Left ventricle myocardium inferior (tissue), 1 donor: ENCODE measurements at regions of chr12 and their contacts with region 1.

Region 1: GRCh38 chr12:34022079-34022830 is at the start of gene ALG10:
- DNase-seq: peak; percentile 94
- H3K4me3 ChIP-seq: peak within 1 kb of the TSS; percentile 87
- H3K27ac ChIP-seq: peak within 1 kb of the TSS; percentile 89
- H3K4me1 ChIP-seq: peaks cover 24% of the 10 kb centered on the region
- H3K27me3 ChIP-seq: no peaks in the 10 kb centered on the region
- CTCF ChIP-seq: peak; percentile 84
- total RNA-seq, gene ALG10: 3.9 TPM

Region 2: GRCh38 chr12:32755654-32756475 is 1266.4 kb before region 1 on chr12 and contains the start of gene YARS2:
- intact Hi-C with region 1: loop called (anchors 5 kb)
- DNase-seq: peak; percentile 94
- H3K4me3 ChIP-seq: peak within 1 kb of the TSS; percentile 97
- H3K27ac ChIP-seq: peak within 1 kb of the TSS; percentile 92
- H3K4me1 ChIP-seq: peaks cover 30% of the 10 kb centered on the region
- H3K27me3 ChIP-seq: peaks cover 1% of the 10 kb centered on the region
- CTCF ChIP-seq: peak; percentile 85
- total RNA-seq, gene YARS2: 11.6 TPM

Region 3: GRCh38 chr12:32947206-32948067 is 1074.8 kb before region 1 on chr12:
- intact Hi-C with region 1: loop called (anchors 10 kb)
- DNase-seq: no peak
- H3K4me3 ChIP-seq: no peak overlapping the region
- H3K27ac ChIP-seq: no peak overlapping the region
- H3K4me1 ChIP-seq: no peaks in the 10 kb centered on the region
- H3K27me3 ChIP-seq: peaks cover 4% of the 10 kb centered on the region
- CTCF ChIP-seq: no peak